Aorta (tissue), 5 donors: ENCODE measurements at regions of chr11 and their contacts with region 1.

Region 1: DNA sequence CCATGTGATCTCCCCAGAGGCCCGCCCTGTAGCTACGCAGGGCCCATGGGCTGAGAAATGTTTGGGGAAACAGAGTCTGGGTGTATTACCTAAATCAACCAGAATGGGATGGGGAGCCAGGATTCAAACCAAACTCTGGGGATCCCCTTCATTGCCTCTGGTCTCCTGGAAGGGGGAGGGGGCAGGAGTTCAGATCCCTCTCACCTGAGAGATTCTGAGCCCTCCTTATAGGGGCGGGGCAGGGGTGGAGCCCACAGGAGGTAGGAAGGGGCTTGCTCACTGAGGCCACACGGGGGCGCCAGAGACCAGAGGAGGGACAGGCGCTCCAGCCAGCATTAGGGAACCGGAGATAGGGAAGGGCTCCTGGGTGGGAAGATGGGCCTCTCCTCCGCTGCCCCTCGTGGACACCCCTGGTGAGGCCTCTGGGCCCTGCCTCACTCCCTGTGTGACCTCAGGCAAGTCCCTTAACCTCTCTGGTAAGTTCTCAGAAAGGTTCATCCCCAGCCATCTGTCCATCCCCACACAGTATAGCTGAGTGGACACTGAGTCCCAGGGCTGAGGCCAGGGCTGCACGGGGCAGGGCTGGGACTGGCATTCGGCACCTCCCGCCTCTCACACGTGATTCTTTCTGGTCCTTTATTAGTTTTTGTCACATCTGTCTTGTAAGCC is 2.7 kb upstream of the CDC42BPG start:
- DNase-seq: peak; percentile 95 to 99
- ATAC-seq: peak; percentile 92
- H3K4me3 ChIP-seq: no peak overlapping the region
- H3K27ac ChIP-seq: no peak overlapping the region
- H3K4me1 ChIP-seq: no peaks in the 10 kb centered on the region
- H3K27me3 ChIP-seq: no peaks in the 10 kb centered on the region

Region 2: DNA sequence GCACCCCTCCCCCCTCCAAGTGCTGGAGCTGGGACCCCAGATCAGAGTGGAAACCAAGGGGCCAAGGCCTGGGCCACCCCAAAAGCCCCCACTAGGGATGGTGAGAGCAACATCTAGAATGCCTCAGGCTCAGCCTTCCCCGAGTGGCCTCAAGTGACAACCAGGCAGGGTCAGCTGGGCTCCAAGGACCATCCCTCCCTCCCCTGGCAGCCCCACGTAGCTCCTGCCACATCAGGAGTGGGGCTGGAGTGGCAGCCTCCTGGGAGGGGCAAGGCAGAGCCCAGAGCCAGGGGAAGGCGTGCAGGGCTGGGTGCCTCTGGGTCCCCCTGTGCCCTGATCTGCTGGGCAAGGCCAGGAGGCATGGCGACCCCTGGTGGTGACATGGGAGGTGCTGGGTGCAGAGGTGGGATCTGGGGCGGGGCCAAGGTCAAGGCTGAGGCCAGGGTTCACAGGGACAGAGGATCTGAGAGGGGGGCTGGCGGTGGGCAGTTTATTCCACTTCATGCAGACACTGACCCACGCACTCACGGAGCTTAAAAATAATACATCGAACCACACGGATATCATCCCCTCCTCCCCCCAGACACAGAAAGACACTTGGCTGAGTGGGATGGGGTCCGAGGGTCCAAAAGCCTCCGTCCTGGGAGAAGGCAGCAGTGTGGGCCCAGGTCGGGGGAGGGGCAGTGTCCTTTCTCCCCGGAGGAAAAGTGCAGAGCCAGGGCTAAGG is 47.1 kb after region 1 on chr11:
- intact Hi-C with region 1: loop called (anchors 1 to 2 kb)
- DNase-seq: peak; percentile 91 to 98
- ATAC-seq: peak; percentile 81
- H3K4me3 ChIP-seq: no peak overlapping the region
- H3K27ac ChIP-seq: no peak overlapping the region
- H3K4me1 ChIP-seq: no peaks in the 10 kb centered on the region
- H3K27me3 ChIP-seq: no peaks in the 10 kb centered on the region

Region 3: DNA sequence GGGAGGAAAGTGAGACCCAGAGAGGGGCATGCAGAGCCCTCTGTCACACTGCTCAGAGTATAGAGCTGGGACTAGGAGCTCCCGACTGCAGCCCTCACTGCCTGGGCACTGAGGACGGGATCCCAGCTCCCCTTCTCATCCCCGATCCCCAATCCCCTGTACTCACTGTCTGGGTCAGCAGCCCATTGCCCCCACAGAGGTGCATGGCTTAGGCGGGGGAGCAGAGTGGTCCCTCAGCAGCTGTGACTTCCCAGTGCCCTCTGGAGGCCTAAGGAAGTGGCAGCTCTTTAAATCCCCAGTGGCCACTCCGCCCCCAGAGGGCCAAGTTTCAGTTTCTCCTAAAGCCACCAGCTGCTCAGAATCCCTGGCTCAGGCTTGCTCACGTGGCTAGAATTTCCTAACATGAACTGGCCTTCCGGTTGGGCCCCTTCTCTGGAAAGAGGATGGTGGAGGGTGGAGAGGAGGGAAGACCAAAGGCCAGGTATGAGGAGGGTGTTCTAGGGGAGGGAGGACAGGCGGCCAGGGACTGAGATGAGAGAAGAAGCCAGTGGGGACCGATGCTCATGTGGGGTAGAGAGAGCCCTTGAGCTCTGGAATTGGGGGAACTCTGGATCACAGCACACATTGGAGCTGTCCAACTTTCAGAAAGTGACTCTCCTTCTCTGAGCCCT is 149.7 kb after region 1 on chr11 and contains the start of gene BATF2:
- intact Hi-C with region 1: loop called (anchors 10 kb)
- DNase-seq: peak; percentile 87 to 88
- ATAC-seq: peak; percentile 86
- H3K4me3 ChIP-seq: peak within 1 kb of the TSS; percentile 11 to 18
- H3K27ac ChIP-seq: peak within 1 kb of the TSS in 1 of 2 donors; percentile 7
- H3K4me1 ChIP-seq: no peaks in the 10 kb centered on the region
- H3K27me3 ChIP-seq: no peaks in the 10 kb centered on the region
- total RNA-seq, gene BATF2: 2.5 to 3.6 TPM